ENCODE measurements at regions of chr1 and their contacts with region 1.

Region 1: DNA sequence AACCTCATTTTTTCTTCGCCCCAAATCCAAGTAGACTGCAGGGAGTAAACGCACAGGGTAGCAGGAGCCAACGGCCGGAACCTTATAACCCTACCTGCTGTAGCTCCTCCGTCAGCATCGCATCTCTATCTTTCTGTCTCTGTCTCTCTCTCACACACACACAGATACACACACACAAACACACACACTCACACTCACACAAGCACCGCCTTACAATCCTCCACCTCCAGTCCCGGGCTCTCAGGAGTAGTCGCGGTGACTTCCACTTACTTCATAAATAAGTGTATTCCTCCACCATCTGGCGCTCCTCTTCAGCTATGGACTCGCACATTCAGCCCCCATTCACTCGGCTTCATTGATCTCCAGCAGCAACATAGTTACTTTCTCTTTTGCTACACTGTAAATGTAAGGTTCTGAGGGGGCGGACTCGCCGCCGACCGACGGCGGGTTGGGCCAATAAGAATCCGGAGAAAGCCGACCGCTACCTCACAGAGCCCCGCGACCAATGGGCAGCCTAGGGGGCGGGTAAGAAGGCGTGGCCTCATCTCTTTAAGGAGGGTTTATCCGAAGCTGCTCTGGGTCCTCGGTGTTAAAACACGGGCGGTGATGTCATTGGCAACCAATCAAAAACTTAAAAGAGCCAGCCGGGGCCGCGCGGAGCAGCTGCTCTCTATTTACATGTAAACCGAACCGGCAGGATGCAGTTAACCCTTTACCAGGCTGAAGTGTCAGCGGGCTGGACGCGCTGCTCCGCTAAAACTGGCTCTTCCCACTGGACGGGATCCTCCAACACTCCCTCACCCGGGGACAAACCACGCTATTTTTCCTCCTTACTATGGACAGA is at the start of gene DUSP10:
- DNase-seq: peak; percentile 100
- H3K4me3 ChIP-seq: peak within 1 kb of the TSS; percentile 71 to 78
- H3K27ac ChIP-seq: peak within 1 kb of the TSS; percentile 97 to 99
- H3K4me1 ChIP-seq: no peaks in the 10 kb centered on the region
- H3K27me3 ChIP-seq: no peaks in the 10 kb centered on the region
- CTCF ChIP-seq: no peak
- POLR2A ChIP-seq: peak; percentile 91
- total RNA-seq, gene DUSP10: 5.8 to 13.6 TPM

Region 2: DNA sequence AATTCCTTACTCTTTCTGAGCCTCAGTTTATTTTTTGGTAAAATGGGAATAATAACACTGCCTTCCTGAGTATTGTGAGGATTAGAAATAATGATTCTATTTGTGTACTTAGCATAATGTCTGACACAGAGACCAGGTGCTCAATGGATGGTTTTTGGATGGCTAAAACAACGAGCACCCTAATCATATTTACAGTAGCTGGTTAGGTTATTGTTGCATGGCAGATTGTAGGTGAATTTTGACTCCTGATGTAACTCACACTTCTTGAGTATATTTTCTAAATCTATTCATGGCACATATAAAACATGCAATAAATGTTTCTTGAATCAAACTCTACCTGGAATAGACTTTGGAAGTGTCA is 11.9 kb after region 1 on chr1:
- intact Hi-C with region 1: no loop called
- DNase-seq: no peak
- H3K4me3 ChIP-seq: no peak overlapping the region
- H3K27ac ChIP-seq: no peak overlapping the region
- H3K4me1 ChIP-seq: no peaks in the 10 kb centered on the region
- H3K27me3 ChIP-seq: no peaks in the 10 kb centered on the region
- CTCF ChIP-seq: no peak
- POLR2A ChIP-seq: no peak

Region 3: DNA sequence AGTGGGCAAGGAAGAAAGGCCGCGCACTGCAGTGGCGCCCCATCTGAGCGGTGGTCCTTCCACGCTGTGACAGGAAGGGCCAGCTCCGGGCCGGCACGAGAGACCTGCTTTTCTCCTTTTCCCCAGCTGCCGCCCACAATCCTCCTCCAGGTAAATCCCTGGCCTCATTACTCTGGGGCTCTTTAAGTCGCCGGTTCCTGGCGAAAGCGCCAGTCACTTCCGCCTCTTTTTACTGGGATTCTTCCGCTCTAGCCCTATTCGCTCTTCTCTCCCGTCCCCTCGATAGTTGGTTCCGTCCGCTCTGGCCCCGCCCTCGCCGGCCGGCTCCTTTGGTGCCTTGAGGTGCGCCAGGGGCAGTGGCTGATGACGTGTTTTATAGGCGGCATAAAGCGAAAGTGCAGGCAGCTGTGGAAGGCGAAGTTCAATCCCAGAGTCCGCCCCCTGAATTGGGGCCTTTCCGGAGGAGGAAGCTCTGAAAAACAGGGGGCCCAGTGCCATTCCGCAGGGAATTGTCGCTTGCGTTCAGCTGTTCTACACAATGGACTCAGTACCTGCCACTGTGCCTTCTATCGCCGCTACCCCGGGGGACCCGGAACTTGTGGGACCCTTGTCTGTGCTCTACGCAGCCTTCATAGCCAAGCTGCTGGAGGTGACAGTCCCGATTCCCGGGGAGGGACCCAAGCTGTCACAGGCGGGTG is 902.2 kb after region 1 on chr1:
- intact Hi-C with region 1: loop called (anchors 10 kb)
- DNase-seq: peak; percentile 95
- H3K4me3 ChIP-seq: peak overlapping the region; percentile 61 to 78
- H3K27ac ChIP-seq: peak overlapping the region; percentile 85 to 86
- H3K4me1 ChIP-seq: peaks cover 2% of the 10 kb centered on the region
- H3K27me3 ChIP-seq: no peaks in the 10 kb centered on the region
- CTCF ChIP-seq: peak in 2 of 4 experiments; percentile 18 to 22
- POLR2A ChIP-seq: peak; percentile 48